Activated naive CD4-positive, alpha-beta T cell treated with anti-CD3 and anti-CD28 coated beads for 36 hours (primary cell): ENCODE measurements at regions of chr17 and their contacts with region 1.

Region 1: GRCh38 chr17:36534840-36535668 is at the starts of genes MYO19 and PIGW:
- DNase-seq: peak; percentile 86
- H3K4me3 Mint-ChIP-seq: peak within 1 kb of the TSS; percentile 98
- H3K27ac Mint-ChIP-seq: peak within 1 kb of the TSS; percentile 96
- H3K4me1 Mint-ChIP-seq: peaks cover 48% of the 10 kb centered on the region
- H3K27me3 Mint-ChIP-seq: no peaks in the 10 kb centered on the region
- total RNA-seq, gene MYO19: 99.6 to 107 TPM
- total RNA-seq, gene PIGW: 10.6 to 11.3 TPM

Region 2: GRCh38 chr17:36524428-36524876 is 10.6 kb before region 1 on chr17:
- CTCF ChIA-PET with region 1: no interaction called
- intact Hi-C with region 1: loop called (anchors 1 kb)
- DNase-seq: peak; percentile 31
- H3K4me3 Mint-ChIP-seq: no peak overlapping the region
- H3K27ac Mint-ChIP-seq: peak overlapping the region; percentile 15
- H3K4me1 Mint-ChIP-seq: peaks cover 29% of the 10 kb centered on the region
- H3K27me3 Mint-ChIP-seq: no peaks in the 10 kb centered on the region

Region 3: GRCh38 chr17:36545465-36546417 is 10.7 kb after region 1 on chr17:
- CTCF ChIA-PET with region 1: interaction called, 13 read pairs
- intact Hi-C with region 1: loop called (anchors 1 kb)
- DNase-seq: peak; percentile 98
- H3K4me3 Mint-ChIP-seq: peak overlapping the region; percentile 86
- H3K27ac Mint-ChIP-seq: peak overlapping the region; percentile 94
- H3K4me1 Mint-ChIP-seq: peaks cover 44% of the 10 kb centered on the region
- H3K27me3 Mint-ChIP-seq: no peaks in the 10 kb centered on the region

Region 4: DNA sequence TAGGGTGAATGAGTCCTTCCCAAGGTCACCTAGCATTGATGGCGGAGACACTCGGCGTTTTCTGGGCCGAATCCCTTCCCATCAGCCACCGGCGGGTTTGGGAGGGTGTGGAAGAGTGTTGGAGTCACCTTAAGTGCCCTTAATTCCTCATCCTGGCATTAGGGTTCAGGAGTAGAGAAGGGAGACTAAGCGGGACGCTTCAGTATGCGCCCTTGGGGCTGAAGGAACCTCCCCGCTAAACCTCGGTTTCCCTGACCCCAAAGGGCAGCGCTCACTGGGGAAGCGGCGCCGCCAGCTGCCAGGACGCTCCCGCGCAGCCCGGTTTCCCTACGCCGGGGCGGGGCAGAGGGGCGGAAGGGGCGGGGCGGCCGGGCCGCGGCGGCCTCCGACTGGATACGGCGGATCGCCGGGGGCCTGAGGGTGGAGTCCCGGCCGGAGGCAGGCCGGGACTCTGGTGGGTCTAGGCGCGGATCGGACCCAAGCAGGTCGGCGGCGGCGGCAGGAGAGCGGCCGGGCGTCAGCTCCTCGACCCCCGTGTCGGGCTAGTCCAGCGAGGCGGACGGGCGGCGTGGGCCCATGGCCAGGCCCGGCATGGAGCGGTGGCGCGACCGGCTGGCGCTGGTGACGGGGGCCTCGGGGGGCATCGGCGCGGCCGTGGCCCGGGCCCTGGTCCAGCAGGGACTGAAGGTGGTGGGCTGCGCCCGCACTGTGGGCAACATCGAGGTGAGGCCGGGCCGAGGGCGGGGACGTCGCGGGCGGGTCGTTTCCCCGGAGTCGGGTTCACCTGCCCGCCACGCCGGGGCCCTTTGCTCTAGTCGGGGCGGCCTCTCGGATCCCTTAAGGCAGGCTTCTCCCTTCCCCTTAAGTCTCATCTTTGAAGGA is 56.6 kb after region 1 on chr17 and contains the start of gene DHRS11:
- CTCF ChIA-PET with region 1: no interaction called
- intact Hi-C with region 1: loop called (anchors 2 kb)
- DNase-seq: peak; percentile 83
- H3K4me3 Mint-ChIP-seq: peak within 1 kb of the TSS; percentile 71
- H3K27ac Mint-ChIP-seq: peak within 1 kb of the TSS; percentile 50
- H3K4me1 Mint-ChIP-seq: peaks cover 23% of the 10 kb centered on the region
- H3K27me3 Mint-ChIP-seq: no peaks in the 10 kb centered on the region
- total RNA-seq, gene DHRS11: 8.4 to 9.8 TPM

Region 5: GRCh38 chr17:36689089-36689667 is 154.1 kb after region 1 on chr17:
- CTCF ChIA-PET with region 1: no interaction called
- intact Hi-C with region 1: no loop called
- DNase-seq: no peak
- H3K4me3 Mint-ChIP-seq: no peak overlapping the region
- H3K27ac Mint-ChIP-seq: no peak overlapping the region
- H3K4me1 Mint-ChIP-seq: no peaks in the 10 kb centered on the region
- H3K27me3 Mint-ChIP-seq: peaks cover 1% of the 10 kb centered on the region